ENCODE measurements at regions of chr14 and their contacts with region 1.

Region 1: DNA sequence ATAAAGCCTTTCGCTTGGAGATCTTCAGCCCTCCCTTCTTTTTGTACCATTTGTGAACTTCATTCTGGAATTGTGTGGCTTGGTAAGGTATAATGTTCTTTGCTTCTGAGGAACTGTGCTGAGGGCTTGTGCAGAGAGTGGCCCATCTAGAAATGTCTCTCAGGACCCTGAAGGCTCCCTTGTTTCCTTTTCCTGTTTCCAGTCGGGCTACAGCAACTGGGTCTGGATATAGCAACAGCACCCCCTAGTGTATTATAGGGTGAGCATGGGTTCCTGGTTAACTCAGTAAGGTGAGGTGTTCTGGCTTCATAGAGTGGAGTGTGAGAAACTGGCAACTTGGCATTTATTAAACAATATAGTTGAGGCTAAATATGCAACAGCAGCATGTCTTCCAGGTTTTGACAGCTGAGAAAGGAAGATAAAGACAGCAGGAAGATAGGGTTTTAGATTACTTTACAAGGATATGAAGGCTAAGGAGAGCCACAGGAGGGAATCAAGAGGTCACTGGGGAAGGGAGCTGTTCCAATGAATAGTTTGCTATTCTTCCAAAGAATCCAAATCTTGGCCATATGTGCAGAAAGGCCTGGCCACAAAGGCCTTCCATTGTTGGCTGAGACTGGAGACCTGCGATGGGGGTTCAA is 49.1 kb upstream of the RNU6-8 start:
- DNase-seq: peak; percentile 56
- ATAC-seq: peak; percentile 93
- H3K4me3 Mint-ChIP-seq: no peak overlapping the region
- H3K27ac Mint-ChIP-seq: no peak overlapping the region
- H3K4me1 Mint-ChIP-seq: no peaks in the 10 kb centered on the region
- H3K27me3 Mint-ChIP-seq: no peaks in the 10 kb centered on the region

Region 2: DNA sequence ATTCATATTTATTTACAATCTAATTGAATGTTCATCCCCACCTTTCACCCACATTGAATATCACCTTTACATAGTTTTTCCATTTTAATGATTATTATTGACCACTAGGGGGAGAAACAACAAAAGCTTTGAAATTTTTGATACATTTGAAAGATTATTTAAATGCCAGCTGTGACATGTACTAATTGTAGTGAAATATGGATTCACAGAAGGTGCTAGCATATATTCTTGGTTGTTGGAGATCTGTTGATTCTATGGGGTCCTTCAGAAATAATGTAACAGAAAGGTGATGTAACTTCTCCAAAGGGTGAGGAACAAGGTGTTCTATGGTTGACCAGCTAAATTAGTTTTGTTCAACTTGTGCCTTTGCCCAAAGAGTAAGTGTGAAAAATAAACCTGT is 741.9 kb before region 1 on chr14:
- CTCF ChIA-PET with region 1: interaction called, 17 read pairs
- POLR2A ChIA-PET with region 1: no interaction called
- intact Hi-C with region 1: loop called (anchors 1 kb)
- DNase-seq: no peak
- ATAC-seq: no peak
- H3K4me3 Mint-ChIP-seq: no peak overlapping the region
- H3K27ac Mint-ChIP-seq: no peak overlapping the region
- H3K4me1 Mint-ChIP-seq: no peaks in the 10 kb centered on the region
- H3K27me3 Mint-ChIP-seq: no peaks in the 10 kb centered on the region

Region 3: DNA sequence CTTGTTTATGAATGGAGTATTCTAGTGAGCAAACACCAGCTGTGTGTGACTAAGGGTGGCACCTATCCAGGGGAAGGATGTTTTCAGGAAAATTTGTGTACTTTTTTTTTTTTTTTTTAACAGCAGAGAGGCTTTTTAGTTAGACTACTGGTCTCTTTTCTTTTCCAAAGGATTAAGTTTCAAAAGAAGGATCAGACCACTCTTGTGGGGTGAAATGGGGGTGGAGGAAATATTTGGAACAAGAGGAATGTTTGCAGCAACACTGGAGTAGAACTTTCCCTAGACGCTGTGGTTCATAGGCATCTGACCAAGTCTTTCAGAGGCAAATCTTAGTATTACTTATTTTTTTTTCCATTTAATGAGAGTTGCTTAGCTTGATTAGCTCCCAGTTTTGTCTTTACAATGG is 669.9 kb before region 1 on chr14:
- CTCF ChIA-PET with region 1: no interaction called
- POLR2A ChIA-PET with region 1: no interaction called
- intact Hi-C with region 1: no loop called
- DNase-seq: no peak
- ATAC-seq: no peak
- H3K4me3 Mint-ChIP-seq: no peak overlapping the region
- H3K27ac Mint-ChIP-seq: no peak overlapping the region
- H3K4me1 Mint-ChIP-seq: peaks cover 6% of the 10 kb centered on the region
- H3K27me3 Mint-ChIP-seq: no peaks in the 10 kb centered on the region

Region 4: GRCh38 chr14:31926123-31926522 is 326.0 kb before region 1 on chr14:
- CTCF ChIA-PET with region 1: interaction called, 45 read pairs
- POLR2A ChIA-PET with region 1: no interaction called
- intact Hi-C with region 1: loop called (anchors 1 kb)
- DNase-seq: peak; percentile 49
- ATAC-seq: no peak
- H3K4me3 Mint-ChIP-seq: no peak overlapping the region
- H3K27ac Mint-ChIP-seq: no peak overlapping the region
- H3K4me1 Mint-ChIP-seq: peaks cover 13% of the 10 kb centered on the region
- H3K27me3 Mint-ChIP-seq: no peaks in the 10 kb centered on the region

Region 5: DNA sequence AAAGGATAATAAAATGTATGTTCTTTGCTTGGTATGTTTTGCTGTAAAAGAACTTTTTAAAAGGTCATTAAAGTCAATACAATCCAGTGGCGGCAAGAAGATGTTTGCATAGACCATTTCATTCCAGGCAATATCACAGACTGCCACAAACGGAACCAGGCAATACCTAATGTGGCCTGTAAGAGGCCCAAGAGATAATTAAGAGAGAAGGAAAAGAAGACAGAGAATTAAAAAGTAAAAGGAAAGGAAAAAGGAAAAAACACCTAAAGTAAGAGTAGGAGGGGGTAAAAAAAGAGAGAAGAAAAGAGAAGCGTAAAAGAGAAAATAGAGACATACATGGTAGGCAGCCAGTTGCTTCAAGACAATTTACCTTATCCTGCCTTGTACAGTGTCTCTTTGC is 181.9 kb before region 1 on chr14:
- CTCF ChIA-PET with region 1: interaction called, 81 read pairs
- POLR2A ChIA-PET with region 1: no interaction called
- intact Hi-C with region 1: loop called (anchors 1 kb)
- DNase-seq: no peak
- ATAC-seq: no peak
- H3K4me3 Mint-ChIP-seq: no peak overlapping the region
- H3K27ac Mint-ChIP-seq: no peak overlapping the region
- H3K4me1 Mint-ChIP-seq: no peaks in the 10 kb centered on the region
- H3K27me3 Mint-ChIP-seq: peaks cover 4% of the 10 kb centered on the region

Region 6: DNA sequence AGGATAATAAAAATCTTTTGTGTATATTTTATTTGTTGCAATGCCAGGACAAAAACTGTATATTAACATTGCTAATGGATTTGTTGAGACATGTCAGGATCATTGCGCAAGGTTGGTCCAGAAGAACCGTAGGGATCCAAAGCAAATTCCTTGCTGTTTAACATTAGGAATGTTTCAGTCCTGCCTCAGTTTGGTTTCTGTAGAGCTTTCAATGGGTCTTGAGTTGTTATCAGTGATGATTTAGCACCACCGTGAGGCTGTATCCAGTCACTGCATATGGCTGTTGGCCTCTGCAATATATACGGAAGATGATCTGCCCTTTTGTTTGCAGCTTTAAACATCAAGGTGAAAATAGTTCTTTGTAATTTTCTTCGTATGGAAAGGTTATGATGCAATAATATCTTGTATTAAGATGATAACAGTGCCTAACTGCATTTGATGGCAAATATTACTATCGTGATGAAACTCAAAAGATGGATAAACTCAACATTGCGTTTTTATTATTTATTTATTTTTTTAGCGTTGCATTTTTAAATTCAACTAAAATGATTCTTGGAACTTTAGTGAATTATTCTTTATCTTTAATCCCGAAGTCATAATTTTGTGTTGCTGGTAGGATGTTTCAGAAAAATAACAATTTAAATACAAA is 308.2 kb after region 1 on chr14:
- CTCF ChIA-PET with region 1: interaction called, 5 read pairs
- POLR2A ChIA-PET with region 1: no interaction called
- intact Hi-C with region 1: loop called (anchors 1 to 5 kb)
- DNase-seq: peak; percentile 52
- ATAC-seq: no peak
- H3K4me3 Mint-ChIP-seq: no peak overlapping the region
- H3K27ac Mint-ChIP-seq: no peak overlapping the region
- H3K4me1 Mint-ChIP-seq: peaks cover 12% of the 10 kb centered on the region
- H3K27me3 Mint-ChIP-seq: no peaks in the 10 kb centered on the region

Measured in activated CD4-positive, alpha-beta T cell treated with anti-CD3 and anti-CD28 coated beads for 36 hours (primary cell).